HCT116 (cell line): ENCODE measurements at regions of chr22 and their contacts with region 1.

Region 1: DNA sequence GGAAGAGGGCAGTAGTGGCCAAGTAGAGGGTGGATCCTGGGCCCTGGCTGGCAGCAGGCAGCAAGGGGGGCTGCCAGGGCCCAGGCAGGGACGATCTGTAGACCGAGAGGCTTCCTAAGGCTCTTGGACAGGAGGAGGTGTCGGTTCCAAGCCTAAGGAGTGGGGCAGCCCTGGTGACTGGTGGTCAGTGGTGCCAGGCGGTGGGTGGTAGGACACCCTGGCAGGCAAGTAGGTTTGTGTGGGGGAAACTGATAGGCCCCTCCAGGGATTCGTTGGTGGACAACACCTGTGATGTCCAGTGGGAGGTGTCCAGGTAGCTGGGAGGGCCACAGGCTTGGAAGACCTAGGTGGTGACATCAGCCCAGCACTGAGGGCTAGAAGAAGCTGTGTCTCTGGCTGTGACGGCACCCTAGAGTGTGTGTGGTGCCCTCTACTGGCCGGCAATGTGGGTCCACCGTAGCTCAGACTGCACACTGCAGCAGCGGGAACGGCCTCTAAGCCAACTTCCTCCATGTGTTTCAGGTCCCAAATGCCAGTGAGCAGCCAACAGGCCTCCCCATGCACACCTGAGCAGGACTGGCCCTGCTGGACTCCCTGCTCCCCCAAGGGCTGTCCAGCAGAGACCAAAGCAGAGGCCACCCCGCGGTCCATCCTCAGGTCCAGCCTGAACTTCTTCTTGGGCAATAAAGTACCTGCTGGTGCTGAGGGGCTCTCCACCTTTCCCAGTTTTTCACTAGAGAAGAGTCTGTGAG is 9.4 kb upstream of the SAMM50 start:
- DNase-seq: peak; percentile 41
- ATAC-seq: peak; percentile 99
- H3K4me3 ChIP-seq: no peak overlapping the region
- H3K27ac ChIP-seq: no peak overlapping the region
- H3K4me1 ChIP-seq: peaks cover 0 to 7% of the 10 kb centered on the region in 2 experiments; a peak in 2 of 4 replicates
- H3K27me3 ChIP-seq: no peaks in the 10 kb centered on the region
- CTCF ChIP-seq: peak; percentile 62 to 85 (median 82); a peak in 5 of 6 replicates
- POLR2A ChIP-seq: no peak
- RAD21 ChIP-seq: peak; percentile 57

Region 2: GRCh38 chr22:43553451-43554258 is 392.2 kb before region 1 on chr22:
- CTCF ChIA-PET with region 1: no interaction called
- POLR2A ChIA-PET with region 1: no interaction called
- RAD21 ChIA-PET with region 1: no interaction called
- intact Hi-C with region 1: no loop called
- DNase-seq: no peak
- ATAC-seq: no peak
- H3K4me3 ChIP-seq: no peak overlapping the region
- H3K27ac ChIP-seq: no peak overlapping the region
- H3K4me1 ChIP-seq: no peaks in the 10 kb centered on the region
- H3K27me3 ChIP-seq: peaks cover 15% of the 10 kb centered on the region
- CTCF ChIP-seq: no peak
- POLR2A ChIP-seq: no peak
- RAD21 ChIP-seq: no peak

Region 3: DNA sequence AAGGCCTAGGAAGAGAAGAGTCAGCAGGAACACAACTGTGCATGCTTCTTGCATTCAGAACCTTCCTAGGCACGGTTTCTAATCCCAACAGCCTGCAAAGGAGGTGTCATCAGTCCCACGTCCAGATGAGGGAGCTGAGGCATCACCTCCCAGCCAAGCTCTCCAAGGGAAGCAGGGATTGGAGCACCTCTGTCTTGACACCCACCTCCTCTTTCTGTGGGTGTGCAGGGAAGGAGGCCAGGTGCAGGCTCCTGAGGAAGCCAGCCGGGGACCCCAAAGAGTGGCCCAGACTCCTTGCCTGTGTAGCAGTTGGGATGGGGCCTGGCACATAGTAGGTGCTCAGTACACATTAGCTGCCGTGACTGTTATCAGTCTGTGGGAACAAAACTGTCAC is 56.0 kb before region 1 on chr22:
- CTCF ChIA-PET with region 1: interaction called, 30 read pairs
- POLR2A ChIA-PET with region 1: no interaction called
- RAD21 ChIA-PET with region 1: interaction called, 3 to 5 read pairs
- intact Hi-C with region 1: no loop called
- DNase-seq: no peak
- ATAC-seq: no peak
- H3K4me3 ChIP-seq: no peak overlapping the region
- H3K27ac ChIP-seq: no peak overlapping the region
- H3K4me1 ChIP-seq: peaks cover 0 to 11% of the 10 kb centered on the region in 2 experiments; a peak in 1 of 4 replicates
- H3K27me3 ChIP-seq: no peaks in the 10 kb centered on the region
- CTCF ChIP-seq: peak in 2 of 3 experiments; percentile 14 to 21; a peak in 1 of 6 replicates
- POLR2A ChIP-seq: no peak
- RAD21 ChIP-seq: peak; percentile 47; the same call in 1 of the 2 replicates

Region 4: DNA sequence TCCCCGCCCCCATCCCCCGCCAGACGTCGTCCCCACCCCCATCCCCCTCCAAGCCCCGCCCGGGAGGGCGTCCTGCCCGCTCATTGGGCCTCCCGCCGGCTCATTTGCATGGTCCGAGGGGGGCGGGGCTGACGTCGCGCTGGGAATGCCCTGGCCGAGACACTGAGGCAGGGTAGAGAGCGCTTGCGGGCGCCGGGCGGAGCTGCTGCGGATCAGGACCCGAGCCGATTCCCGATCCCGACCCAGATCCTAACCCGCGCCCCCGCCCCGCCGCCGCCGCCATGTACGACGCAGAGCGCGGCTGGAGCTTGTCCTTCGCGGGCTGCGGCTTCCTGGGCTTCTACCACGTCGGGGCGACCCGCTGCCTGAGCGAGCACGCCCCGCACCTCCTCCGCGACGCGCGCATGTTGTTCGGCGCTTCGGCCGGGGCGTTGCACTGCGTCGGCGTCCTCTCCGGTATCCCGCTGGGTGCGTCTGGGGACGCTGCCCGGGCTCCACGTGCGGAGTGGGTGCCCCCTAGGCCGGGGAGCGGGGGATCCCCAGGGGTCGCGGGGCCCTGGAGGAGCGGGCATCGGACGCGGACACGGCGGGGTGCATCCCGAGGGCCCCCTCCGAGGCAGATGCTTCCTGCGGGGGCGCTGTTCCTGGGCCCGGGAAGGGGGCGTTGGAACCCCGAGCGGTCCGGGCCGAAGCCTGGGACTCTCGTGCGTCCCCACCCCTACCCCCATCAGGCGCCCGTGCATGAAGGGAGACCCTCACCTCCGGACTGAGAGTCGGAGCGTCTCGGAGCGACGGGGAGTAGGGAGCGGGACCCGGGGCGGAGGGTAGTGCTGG is 22.0 kb before region 1 on chr22 and contains the start of gene PNPLA3:
- CTCF ChIA-PET with region 1: interaction called, 13 read pairs
- POLR2A ChIA-PET with region 1: no interaction called
- RAD21 ChIA-PET with region 1: no interaction called
- intact Hi-C with region 1: no loop called
- DNase-seq: peak; percentile 57
- ATAC-seq: peak; percentile 86
- H3K4me3 ChIP-seq: peak within 1 kb of the TSS; percentile 69 to 71
- H3K27ac ChIP-seq: peak within 1 kb of the TSS; percentile 90
- H3K4me1 ChIP-seq: peaks cover 40 to 46% of the 10 kb centered on the region in 2 experiments
- H3K27me3 ChIP-seq: no peaks in the 10 kb centered on the region
- CTCF ChIP-seq: peak in 2 of 3 experiments; percentile 33 to 36; a peak in 3 of 6 replicates
- POLR2A ChIP-seq: peak; percentile 81
- RAD21 ChIP-seq: no peak
- total RNA-seq, gene PNPLA3: 7.3 TPM

Region 5: GRCh38 chr22:43969989-43970755 is 24.4 kb after region 1 on chr22:
- CTCF ChIA-PET with region 1: no interaction called
- POLR2A ChIA-PET with region 1: no interaction called
- RAD21 ChIA-PET with region 1: no interaction called
- intact Hi-C with region 1: no loop called
- DNase-seq: no peak
- ATAC-seq: peak; percentile 58; the same call in 1 of the 2 replicates
- H3K4me3 ChIP-seq: no peak overlapping the region
- H3K27ac ChIP-seq: no peak overlapping the region
- H3K4me1 ChIP-seq: no peaks in the 10 kb centered on the region
- H3K27me3 ChIP-seq: no peaks in the 10 kb centered on the region
- CTCF ChIP-seq: no peak
- POLR2A ChIP-seq: no peak
- RAD21 ChIP-seq: no peak

Region 6: GRCh38 chr22:44080936-44081861 is 135.4 kb after region 1 on chr22:
- CTCF ChIA-PET with region 1: interaction called, 13 read pairs
- POLR2A ChIA-PET with region 1: no interaction called
- RAD21 ChIA-PET with region 1: no interaction called
- intact Hi-C with region 1: no loop called
- DNase-seq: peak; percentile 29
- ATAC-seq: peak; percentile 77
- H3K4me3 ChIP-seq: no peak overlapping the region
- H3K27ac ChIP-seq: no peak overlapping the region
- H3K4me1 ChIP-seq: no peaks in the 10 kb centered on the region; a peak in 1 of 4 replicates
- H3K27me3 ChIP-seq: no peaks in the 10 kb centered on the region
- CTCF ChIP-seq: peak; percentile 46 to 93 (median 91); a peak in 5 of 6 replicates
- POLR2A ChIP-seq: no peak
- RAD21 ChIP-seq: peak; percentile 66